Panc1 (cell line): ENCODE measurements at regions of chr15 and their contacts with region 1.

Region 1: DNA sequence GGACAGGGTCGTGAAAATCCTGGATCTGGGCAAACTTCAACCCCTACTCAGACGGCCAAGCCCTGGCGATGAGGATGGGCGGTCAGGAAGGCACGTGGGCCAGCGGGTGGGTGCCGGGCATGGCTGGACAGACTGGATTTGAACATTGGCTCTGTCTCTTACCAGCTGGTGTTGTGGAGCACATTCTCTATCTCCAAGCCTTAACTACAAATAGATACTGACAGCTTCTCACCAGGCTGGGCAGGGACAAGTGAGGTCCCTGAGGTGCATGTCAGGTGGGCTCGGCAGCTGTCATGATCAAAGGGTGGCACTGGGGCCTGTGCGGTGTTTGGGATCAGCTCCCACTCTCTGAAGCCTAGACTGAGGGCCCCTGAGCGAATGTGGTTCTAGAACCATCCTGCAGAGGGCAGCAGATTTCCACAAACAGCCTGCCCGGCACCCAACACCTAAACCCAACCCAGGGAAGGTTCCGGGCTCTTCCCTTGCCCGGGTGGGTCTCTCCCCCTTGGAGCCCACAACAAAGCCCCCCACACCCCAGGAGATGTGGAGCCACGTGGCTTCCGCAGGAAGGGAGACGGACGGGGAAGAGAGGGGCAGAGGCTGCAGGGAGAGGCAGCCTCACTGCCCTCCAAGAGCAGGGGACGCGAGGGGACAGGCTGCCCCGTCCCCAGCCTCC is 58.4 kb downstream of the RGMA start:
- DNase-seq: peak; percentile 50
- ATAC-seq: peak; percentile 81
- H3K4me3 ChIP-seq: no peak overlapping the region
- H3K27ac ChIP-seq: no peak overlapping the region
- H3K4me1 ChIP-seq: peaks cover 44% of the 10 kb centered on the region
- H3K27me3 ChIP-seq: no peaks in the 10 kb centered on the region
- CTCF ChIP-seq: peak; percentile 92

Region 2: GRCh38 chr15:93087825-93088199 is 57.2 kb after region 1 on chr15:
- CTCF ChIA-PET with region 1: interaction called, 13 read pairs
- POLR2A ChIA-PET with region 1: no interaction called
- in situ Hi-C with region 1: no loop called
- intact Hi-C with region 1: no loop called
- DNase-seq: peak; percentile 33
- ATAC-seq: peak; percentile 79
- H3K4me3 ChIP-seq: peak overlapping the region; percentile 27 to 47
- H3K27ac ChIP-seq: no peak overlapping the region
- H3K4me1 ChIP-seq: peaks cover 3% of the 10 kb centered on the region; the same call in 1 of the 2 replicates
- H3K27me3 ChIP-seq: peaks cover 49% of the 10 kb centered on the region
- CTCF ChIP-seq: peak; percentile 95

Region 3: DNA sequence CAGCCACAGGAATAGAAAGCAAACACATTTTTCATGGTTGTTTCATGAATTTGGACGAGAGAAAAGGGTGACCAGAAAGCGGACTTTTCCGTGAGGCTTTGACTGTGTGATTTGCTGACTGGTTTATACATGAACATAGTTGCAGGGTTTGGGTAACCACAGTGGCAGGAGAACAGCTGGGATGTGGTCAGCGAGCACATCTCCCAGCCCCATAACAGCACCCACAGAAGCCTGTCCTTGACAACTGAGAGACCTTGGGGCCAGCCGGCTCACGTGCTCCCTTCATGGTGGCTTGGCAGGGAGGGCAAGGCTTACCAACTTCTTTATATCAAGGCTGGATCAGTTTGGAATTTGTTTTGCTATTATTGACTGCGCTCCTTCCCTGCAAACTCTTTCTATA is 71.6 kb after region 1 on chr15:
- CTCF ChIA-PET with region 1: no interaction called
- POLR2A ChIA-PET with region 1: no interaction called
- in situ Hi-C with region 1: no loop called
- intact Hi-C with region 1: no loop called
- DNase-seq: no peak
- ATAC-seq: no peak
- H3K4me3 ChIP-seq: no peak overlapping the region
- H3K27ac ChIP-seq: no peak overlapping the region
- H3K4me1 ChIP-seq: no peaks in the 10 kb centered on the region
- H3K27me3 ChIP-seq: no peaks in the 10 kb centered on the region
- CTCF ChIP-seq: no peak

Region 4: DNA sequence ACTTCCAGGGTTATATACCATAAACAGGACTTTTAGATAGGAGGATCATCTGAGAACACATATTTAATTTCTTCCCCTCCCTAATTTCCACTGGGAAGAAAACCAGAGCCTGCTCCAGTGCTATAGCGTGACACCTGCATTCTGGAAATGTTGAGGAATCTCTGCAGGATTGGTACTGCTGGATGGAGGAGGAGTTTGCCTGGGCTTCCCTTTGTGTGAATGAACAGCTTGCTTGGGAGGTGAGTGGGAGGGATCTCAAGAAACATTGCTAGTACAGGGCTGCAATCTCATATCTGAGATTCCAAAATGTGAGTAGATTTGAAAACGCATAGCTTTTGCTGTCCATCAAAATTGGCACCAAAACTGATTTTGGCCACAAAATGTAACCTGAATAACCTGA is 354.3 kb after region 1 on chr15:
- CTCF ChIA-PET with region 1: no interaction called
- POLR2A ChIA-PET with region 1: no interaction called
- in situ Hi-C with region 1: no loop called
- intact Hi-C with region 1: no loop called
- DNase-seq: no peak
- ATAC-seq: no peak
- H3K4me3 ChIP-seq: no peak overlapping the region
- H3K27ac ChIP-seq: no peak overlapping the region
- H3K4me1 ChIP-seq: no peaks in the 10 kb centered on the region
- H3K27me3 ChIP-seq: no peaks in the 10 kb centered on the region; the same call in 1 of the 2 replicates
- CTCF ChIP-seq: no peak

Region 5: DNA sequence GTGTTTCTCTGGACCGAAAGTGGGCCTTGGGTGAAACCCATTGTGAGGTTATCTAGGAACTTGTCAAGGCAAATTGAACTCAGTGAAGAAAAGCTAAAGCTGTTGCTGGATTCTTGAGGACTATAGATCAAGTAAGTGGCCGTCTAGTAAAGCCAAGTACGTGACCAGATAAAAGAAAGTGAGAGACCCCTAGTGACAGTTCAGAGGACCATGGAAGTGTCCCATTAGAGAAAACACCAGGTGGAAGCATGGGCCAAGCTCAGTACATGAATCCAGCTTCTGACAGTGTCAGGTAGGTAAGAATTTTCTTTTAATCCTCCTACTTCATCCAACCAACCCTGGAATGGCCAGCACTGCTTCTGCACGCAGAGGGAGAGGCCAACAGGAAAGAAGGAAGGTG is 407.7 kb after region 1 on chr15:
- CTCF ChIA-PET with region 1: interaction called, 12 read pairs
- POLR2A ChIA-PET with region 1: no interaction called
- in situ Hi-C with region 1: no loop called
- intact Hi-C with region 1: no loop called
- DNase-seq: no peak
- ATAC-seq: no peak
- H3K4me3 ChIP-seq: no peak overlapping the region
- H3K27ac ChIP-seq: no peak overlapping the region
- H3K4me1 ChIP-seq: no peaks in the 10 kb centered on the region
- H3K27me3 ChIP-seq: no peaks in the 10 kb centered on the region
- CTCF ChIP-seq: no peak; the same call in 1 of the 2 replicates

Region 6: GRCh38 chr15:93982226-93982727 is 951.7 kb after region 1 on chr15:
- CTCF ChIA-PET with region 1: no interaction called
- POLR2A ChIA-PET with region 1: no interaction called
- in situ Hi-C with region 1: no loop called
- intact Hi-C with region 1: loop called (anchors 10 kb)
- DNase-seq: no peak
- ATAC-seq: no peak
- H3K4me3 ChIP-seq: no peak overlapping the region
- H3K27ac ChIP-seq: no peak overlapping the region
- H3K4me1 ChIP-seq: no peaks in the 10 kb centered on the region
- H3K27me3 ChIP-seq: no peaks in the 10 kb centered on the region
- CTCF ChIP-seq: no peak

Region 7: DNA sequence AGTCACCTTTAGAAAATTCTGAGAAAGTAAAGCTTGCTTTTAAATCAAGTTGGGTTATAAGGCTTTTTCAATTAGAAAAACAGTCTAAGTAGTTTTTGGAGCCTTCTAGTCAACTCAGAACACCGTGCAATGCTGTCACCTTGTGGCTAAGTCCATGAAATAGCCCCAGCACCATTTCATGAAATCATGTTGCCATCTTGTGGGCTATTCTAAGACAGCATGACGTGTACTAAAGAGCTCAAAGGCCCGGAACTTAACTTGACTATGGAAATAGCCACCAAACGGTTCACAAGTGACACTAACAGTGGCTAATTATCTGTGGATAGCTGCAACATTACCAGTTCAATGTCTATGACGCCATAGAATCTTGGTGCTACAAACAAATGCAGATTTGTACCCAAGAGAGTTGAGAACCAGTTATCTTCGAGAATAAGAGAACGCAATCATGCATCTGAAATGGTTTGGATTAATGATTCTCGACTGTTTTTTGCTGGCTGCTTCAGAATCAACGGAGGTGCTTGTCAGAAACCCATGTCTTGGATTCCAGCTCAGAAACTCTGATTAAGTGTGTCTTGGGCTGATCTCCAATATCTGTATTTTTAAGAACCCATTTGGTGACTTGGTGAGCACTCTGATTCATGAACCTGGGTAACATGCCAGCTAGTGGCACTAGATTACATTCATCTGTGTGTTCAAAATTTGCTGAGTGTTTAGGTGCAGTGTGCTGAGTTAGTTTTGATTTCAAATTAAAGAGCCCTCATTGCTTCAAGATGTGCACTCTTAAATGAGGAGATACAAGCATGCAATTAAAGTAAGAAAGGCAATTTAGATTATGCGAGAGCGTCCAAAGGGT is 1089.6 kb after region 1 on chr15:
- CTCF ChIA-PET with region 1: interaction called, 53 read pairs
- POLR2A ChIA-PET with region 1: no interaction called
- in situ Hi-C with region 1: no loop called
- intact Hi-C with region 1: loop called (anchors 1 kb)
- DNase-seq: peak; percentile 77
- ATAC-seq: peak; percentile 99
- H3K4me3 ChIP-seq: no peak overlapping the region
- H3K27ac ChIP-seq: no peak overlapping the region
- H3K4me1 ChIP-seq: no peaks in the 10 kb centered on the region
- H3K27me3 ChIP-seq: no peaks in the 10 kb centered on the region
- CTCF ChIP-seq: peak; percentile 94

Region 8: GRCh38 chr15:94324117-94324826 is 1293.7 kb after region 1 on chr15:
- CTCF ChIA-PET with region 1: interaction called, 5 read pairs
- POLR2A ChIA-PET with region 1: no interaction called
- in situ Hi-C with region 1: no loop called
- intact Hi-C with region 1: loop called (anchors 10 kb)
- DNase-seq: peak; percentile 64
- ATAC-seq: peak; percentile 95
- H3K4me3 ChIP-seq: no peak overlapping the region
- H3K27ac ChIP-seq: no peak overlapping the region
- H3K4me1 ChIP-seq: no peaks in the 10 kb centered on the region
- H3K27me3 ChIP-seq: no peaks in the 10 kb centered on the region
- CTCF ChIP-seq: peak; percentile 90